ENCODE measurements at regions of chr6 and their contacts with region 1.

Region 1: GRCh38 chr6:155188707-155189496 is 74.9 kb upstream of the CLDN20 start:
- DNase-seq: no peak
- H3K4me3 Mint-ChIP-seq: peak overlapping the region; percentile 37
- H3K27ac Mint-ChIP-seq: peak overlapping the region; percentile 57
- H3K4me1 Mint-ChIP-seq: peaks cover 41% of the 10 kb centered on the region
- H3K27me3 Mint-ChIP-seq: no peaks in the 10 kb centered on the region

Region 2: GRCh38 chr6:155223646-155224451 is 34.9 kb after region 1 on chr6:
- CTCF ChIA-PET with region 1: no interaction called
- POLR2A ChIA-PET with region 1: interaction called, 6 read pairs
- intact Hi-C with region 1: loop called (anchors 1 kb)
- DNase-seq: peak; percentile 78
- H3K4me3 Mint-ChIP-seq: peak overlapping the region; percentile 40
- H3K27ac Mint-ChIP-seq: peak overlapping the region; percentile 75
- H3K4me1 Mint-ChIP-seq: peaks cover 17% of the 10 kb centered on the region
- H3K27me3 Mint-ChIP-seq: peaks cover 6% of the 10 kb centered on the region

Region 3: DNA sequence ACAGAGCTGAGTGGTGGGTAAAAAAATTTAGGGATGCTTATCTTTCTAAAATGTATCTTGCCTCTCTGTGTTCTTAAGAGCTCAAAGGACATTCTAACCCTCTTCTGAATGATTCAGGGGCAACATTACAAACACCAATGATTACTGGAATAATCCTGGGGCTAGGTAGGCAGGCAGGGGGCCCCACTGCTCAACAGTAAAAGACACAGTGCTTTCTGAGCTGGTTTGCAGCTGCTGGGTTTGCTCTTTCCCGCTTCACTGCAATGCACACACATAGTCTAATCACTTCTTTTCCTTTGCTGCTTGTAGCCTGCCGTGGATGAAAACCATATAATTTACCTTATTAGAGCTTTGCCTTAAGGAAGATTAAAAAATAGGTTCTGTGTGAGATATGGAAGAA is 98.9 kb after region 1 on chr6:
- CTCF ChIA-PET with region 1: no interaction called
- POLR2A ChIA-PET with region 1: no interaction called
- intact Hi-C with region 1: no loop called
- DNase-seq: no peak
- H3K4me3 Mint-ChIP-seq: no peak overlapping the region
- H3K27ac Mint-ChIP-seq: no peak overlapping the region
- H3K4me1 Mint-ChIP-seq: peaks cover 15% of the 10 kb centered on the region
- H3K27me3 Mint-ChIP-seq: no peaks in the 10 kb centered on the region

Region 4: GRCh38 chr6:155628306-155628705 is 439.4 kb after region 1 on chr6:
- CTCF ChIA-PET with region 1: no interaction called
- POLR2A ChIA-PET with region 1: no interaction called
- intact Hi-C with region 1: loop called (anchors 10 kb)
- DNase-seq: peak; percentile 85
- H3K4me3 Mint-ChIP-seq: peak overlapping the region; percentile 8
- H3K27ac Mint-ChIP-seq: peak overlapping the region; percentile 95
- H3K4me1 Mint-ChIP-seq: peaks cover 18% of the 10 kb centered on the region
- H3K27me3 Mint-ChIP-seq: peaks cover 1% of the 10 kb centered on the region

Region 5: GRCh38 chr6:156250593-156250992 is 1061.7 kb after region 1 on chr6:
- CTCF ChIA-PET with region 1: no interaction called
- POLR2A ChIA-PET with region 1: no interaction called
- intact Hi-C with region 1: loop called (anchors 10 kb)
- DNase-seq: peak; percentile 63
- H3K4me3 Mint-ChIP-seq: no peak overlapping the region
- H3K27ac Mint-ChIP-seq: peak overlapping the region; percentile 71
- H3K4me1 Mint-ChIP-seq: peaks cover 18% of the 10 kb centered on the region
- H3K27me3 Mint-ChIP-seq: peaks cover 2% of the 10 kb centered on the region